ENCODE measurements at regions of chr20 and their contacts with region 1.

Region 1: GRCh38 chr20:55947701-55948100 is 57.6 kb downstream of the CBLN4 start:
- DNase-seq: no peak
- ATAC-seq: no peak
- H3K4me3 ChIP-seq: no peak overlapping the region
- H3K27ac ChIP-seq: no peak overlapping the region
- H3K4me1 ChIP-seq: no peaks in the 10 kb centered on the region
- H3K27me3 ChIP-seq: no peaks in the 10 kb centered on the region
- CTCF ChIP-seq: no peak

Region 2: DNA sequence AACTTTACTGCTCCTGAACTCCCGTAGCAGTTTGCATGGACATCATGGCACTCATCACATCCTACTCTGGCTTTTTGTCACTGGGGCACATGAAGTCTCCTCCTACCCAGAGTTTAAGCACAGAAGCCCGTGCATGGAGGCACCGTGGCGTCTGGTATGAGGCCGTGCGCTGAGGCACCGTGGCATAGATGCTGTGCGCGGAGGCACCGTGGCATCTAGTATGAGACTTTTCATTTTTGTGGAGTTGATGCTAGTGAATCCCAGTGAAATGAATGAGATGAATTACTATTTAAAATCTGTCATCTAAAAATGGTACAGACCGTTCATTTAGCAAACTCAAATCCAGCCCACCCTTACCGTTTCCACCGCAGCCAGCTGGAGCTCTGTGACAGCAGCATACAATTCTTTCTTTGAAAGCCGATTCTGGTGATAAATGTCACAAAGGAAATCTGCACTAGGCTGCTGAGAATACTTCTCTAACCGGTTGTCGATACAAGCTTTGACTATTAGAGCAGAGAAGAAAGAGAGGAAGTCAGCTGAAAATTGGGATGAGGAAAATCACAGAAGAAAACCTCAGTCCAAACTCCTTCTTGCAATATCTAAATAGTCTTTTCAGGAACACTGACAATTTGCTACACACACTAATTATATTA is 1785.2 kb before region 1 on chr20:
- intact Hi-C with region 1: loop called in 1 of 10 experiments (anchors 5 kb)
- DNase-seq: no peak
- ATAC-seq: no peak
- H3K4me3 ChIP-seq: no peak overlapping the region
- H3K27ac ChIP-seq: no peak overlapping the region
- H3K4me1 ChIP-seq: no peaks in the 10 kb centered on the region
- H3K27me3 ChIP-seq: peaks cover 0 to 62% (median 45%) of the 10 kb centered on the region in 7 donors
- CTCF ChIP-seq: no peak